Activated T-helper 1 cell treated with anti-CD3 and anti-CD28 coated beads, Interleukin-12 subunit alpha, Interleukin-12 subunit beta, Interleukin-2, Interleukin-4 antibody, amounts not matched to agents 30 ng/mL and 10 ng/mL and 1 ng/mL, durations not matched to agents 14 hours and 24 hours and 36 hours (primary cell): ENCODE measurements at regions of chr5 and their contacts with region 1.

Region 1: DNA sequence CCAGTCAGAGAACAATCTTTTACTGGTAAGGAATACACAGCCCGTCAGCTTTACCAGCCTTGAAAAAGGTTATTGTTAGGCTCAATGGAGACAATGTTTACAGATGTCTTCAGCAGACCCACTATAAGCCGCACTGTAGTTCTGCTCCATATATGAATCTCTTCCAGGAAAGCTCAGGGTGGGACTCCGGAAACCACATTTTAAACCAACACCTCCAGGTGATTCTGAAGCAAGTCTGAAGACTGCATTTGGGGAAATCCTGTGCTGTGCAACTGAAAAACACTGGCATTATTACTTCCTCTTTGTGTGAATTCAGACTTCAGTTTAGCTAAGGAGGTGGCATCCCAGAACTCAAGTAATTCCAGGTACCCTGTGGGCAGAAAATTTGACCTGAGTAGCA is 3.5 kb downstream of the GZMK start:
- DNase-seq: peak; percentile 69
- H3K4me3 Mint-ChIP-seq: peak overlapping the region; percentile 68
- H3K27ac Mint-ChIP-seq: peak overlapping the region; percentile 85
- H3K4me1 Mint-ChIP-seq: peaks cover 89% of the 10 kb centered on the region
- H3K27me3 Mint-ChIP-seq: no peaks in the 10 kb centered on the region

Region 2: GRCh38 chr5:54347221-54347865 is 680.3 kb before region 1 on chr5:
- intact Hi-C with region 1: no loop called
- DNase-seq: no peak
- H3K4me3 Mint-ChIP-seq: no peak overlapping the region
- H3K27ac Mint-ChIP-seq: no peak overlapping the region
- H3K4me1 Mint-ChIP-seq: no peaks in the 10 kb centered on the region
- H3K27me3 Mint-ChIP-seq: no peaks in the 10 kb centered on the region

Region 3: DNA sequence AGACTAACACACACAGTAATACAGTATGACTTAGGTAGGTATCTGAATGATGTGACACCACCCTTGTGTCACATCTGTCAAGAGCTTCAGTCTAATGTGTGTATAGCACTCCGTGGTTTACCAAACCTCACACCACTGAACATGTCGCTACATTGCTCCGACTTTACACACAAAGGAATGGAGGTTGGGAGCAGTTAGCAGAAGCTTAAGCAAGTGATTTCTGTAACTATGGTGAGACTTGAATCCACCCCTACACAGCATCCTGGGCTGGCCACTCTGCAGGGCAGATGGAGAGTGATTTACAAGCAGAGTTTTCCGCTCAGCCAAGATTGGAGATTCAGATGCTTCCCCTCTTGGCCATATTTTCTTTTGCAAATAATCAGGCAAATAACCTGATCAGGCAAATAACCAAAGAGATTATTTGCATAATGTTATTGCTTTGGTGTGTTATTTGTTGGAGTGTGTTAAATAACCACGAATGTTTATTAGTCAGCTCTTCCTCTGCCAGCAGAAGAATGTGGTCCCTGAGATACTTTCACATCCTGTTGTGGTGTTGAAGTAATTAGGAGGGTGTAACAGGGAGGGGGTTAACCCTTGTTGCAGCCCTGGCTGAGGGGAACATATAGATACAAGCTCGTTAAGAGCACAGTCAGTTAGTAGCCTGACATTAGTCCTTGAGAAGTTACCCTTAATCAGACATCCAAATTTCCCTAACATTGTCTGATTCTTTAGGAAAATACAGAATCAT is 417.2 kb before region 1 on chr5:
- intact Hi-C with region 1: loop called (anchors 5 kb)
- DNase-seq: peak; percentile 41
- H3K4me3 Mint-ChIP-seq: peak overlapping the region; percentile 68
- H3K27ac Mint-ChIP-seq: peak overlapping the region; percentile 92
- H3K4me1 Mint-ChIP-seq: peaks cover 27% of the 10 kb centered on the region
- H3K27me3 Mint-ChIP-seq: peaks cover 3% of the 10 kb centered on the region

Region 4: DNA sequence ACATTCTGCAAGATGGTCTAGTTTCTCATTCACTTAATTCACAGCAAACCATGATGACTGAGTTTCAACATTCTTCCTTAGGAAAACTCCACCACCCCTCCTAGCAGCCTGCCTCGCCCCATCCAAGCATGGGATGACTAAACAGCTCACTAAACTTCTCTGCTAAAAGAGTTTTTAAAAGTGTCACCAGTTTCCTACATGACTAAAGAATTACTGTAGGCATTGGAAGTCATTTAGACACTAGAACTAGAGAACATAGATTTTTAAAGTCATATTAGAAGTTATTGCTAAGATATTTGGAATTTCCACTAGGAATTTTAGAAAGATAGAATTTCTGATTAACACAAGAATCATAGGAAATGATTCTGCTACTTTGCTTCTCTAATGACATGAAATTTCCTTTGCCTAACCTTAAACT is 36.7 kb before region 1 on chr5:
- intact Hi-C with region 1: loop called (anchors 2 kb)
- DNase-seq: no peak
- H3K4me3 Mint-ChIP-seq: no peak overlapping the region
- H3K27ac Mint-ChIP-seq: no peak overlapping the region
- H3K4me1 Mint-ChIP-seq: peaks cover 43% of the 10 kb centered on the region
- H3K27me3 Mint-ChIP-seq: peaks cover 7% of the 10 kb centered on the region

Region 5: GRCh38 chr5:55096861-55097260 is 69.3 kb after region 1 on chr5:
- intact Hi-C with region 1: loop called (anchors 1 kb)
- DNase-seq: peak; percentile 51
- H3K4me3 Mint-ChIP-seq: peak overlapping the region; percentile 64
- H3K27ac Mint-ChIP-seq: peak overlapping the region; percentile 98
- H3K4me1 Mint-ChIP-seq: peaks cover 88% of the 10 kb centered on the region
- H3K27me3 Mint-ChIP-seq: no peaks in the 10 kb centered on the region

Region 6: DNA sequence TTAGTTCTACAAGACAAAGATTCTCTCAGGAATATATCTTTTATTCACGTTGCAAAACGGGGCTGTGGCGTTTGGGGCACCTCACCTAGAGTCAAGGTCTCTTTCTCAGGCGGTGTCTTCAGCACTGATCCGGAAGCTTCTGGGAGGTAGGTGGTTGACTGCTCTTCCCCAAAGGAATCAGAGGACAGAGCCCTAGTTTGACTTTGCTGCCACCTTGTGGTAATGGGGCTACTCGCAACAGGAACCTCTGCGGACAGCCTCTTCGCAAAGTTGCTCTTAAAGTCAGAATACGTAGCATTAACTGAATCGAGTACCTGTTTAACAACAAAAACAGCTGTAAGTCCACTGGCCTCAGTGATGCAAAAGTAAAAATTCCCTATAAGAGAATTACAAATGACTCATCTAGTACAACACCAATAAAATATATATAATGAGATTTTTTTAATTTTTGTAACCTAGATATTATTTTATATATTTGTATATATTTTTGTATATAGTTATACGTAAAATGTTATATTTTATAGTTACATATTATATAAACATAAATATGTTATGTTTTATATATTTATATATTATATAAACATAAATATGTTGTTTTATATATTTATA is 119.1 kb after region 1 on chr5:
- intact Hi-C with region 1: loop called (anchors 1 kb)
- DNase-seq: peak; percentile 82
- H3K4me3 Mint-ChIP-seq: peak overlapping the region; percentile 20
- H3K27ac Mint-ChIP-seq: no peak overlapping the region
- H3K4me1 Mint-ChIP-seq: peaks cover 31% of the 10 kb centered on the region
- H3K27me3 Mint-ChIP-seq: peaks cover 17% of the 10 kb centered on the region

Region 7: DNA sequence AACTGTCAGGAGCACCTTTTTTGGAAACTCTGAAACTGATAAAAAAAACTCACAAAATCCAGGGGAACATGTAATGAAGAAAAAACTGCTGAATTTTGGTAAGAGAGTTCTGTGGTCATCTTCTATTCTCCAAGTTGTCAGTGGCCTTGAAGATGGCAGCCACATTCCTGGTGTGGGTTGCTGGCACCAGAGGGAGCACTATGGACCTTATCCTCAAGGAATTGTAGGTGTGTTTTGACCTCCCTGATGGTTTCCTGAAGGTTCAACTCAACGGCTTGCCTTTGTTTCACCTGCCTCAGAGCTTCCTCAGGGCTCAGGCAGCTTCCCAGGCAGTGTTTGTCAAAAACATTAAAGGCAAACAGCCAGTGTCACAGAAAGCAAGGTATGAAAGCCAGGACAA is 686.7 kb after region 1 on chr5:
- intact Hi-C with region 1: no loop called
- DNase-seq: no peak
- H3K4me3 Mint-ChIP-seq: no peak overlapping the region
- H3K27ac Mint-ChIP-seq: no peak overlapping the region
- H3K4me1 Mint-ChIP-seq: peaks cover 19% of the 10 kb centered on the region
- H3K27me3 Mint-ChIP-seq: no peaks in the 10 kb centered on the region

Region 8: DNA sequence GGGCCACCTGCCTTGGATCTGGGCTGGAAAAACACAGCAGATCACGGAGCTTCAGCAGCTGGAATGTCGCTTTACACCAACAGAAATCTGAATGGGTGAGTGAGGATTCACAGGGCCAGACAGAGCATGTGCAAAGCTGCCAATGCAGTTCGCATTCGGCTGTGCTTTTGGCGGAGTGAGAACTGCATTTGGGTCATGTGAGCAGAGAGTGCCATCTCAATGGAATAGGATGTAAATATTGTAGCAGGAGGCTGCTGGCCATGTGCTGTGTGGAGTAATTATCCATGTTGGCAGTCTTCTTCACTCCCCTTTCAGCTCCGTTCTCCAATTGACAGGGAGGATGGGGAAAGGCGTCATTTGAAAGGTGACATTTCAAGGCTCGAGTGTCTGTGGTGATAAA is 1205.6 kb after region 1 on chr5 and contains the start of gene ANKRD55:
- intact Hi-C with region 1: no loop called
- DNase-seq: no peak
- H3K4me3 Mint-ChIP-seq: no peak within 1 kb of the TSS
- H3K27ac Mint-ChIP-seq: no peak within 1 kb of the TSS
- H3K4me1 Mint-ChIP-seq: no peaks in the 10 kb centered on the region
- H3K27me3 Mint-ChIP-seq: peaks cover 20% of the 10 kb centered on the region
- total RNA-seq, gene ANKRD55: 1.0 and 1.8 TPM in 2 replicates